ENCODE measurements at regions of chr5 and their contacts with region 1.

Region 1: GRCh38 chr5:72108202-72109061 is 1.2 kb downstream of the MAP1B start:
- DNase-seq: peak; percentile 85
- H3K4me3 ChIP-seq: peak overlapping the region; percentile 87
- H3K27ac ChIP-seq: peak overlapping the region; percentile 80
- H3K4me1 ChIP-seq: peaks cover 43% of the 10 kb centered on the region
- H3K27me3 ChIP-seq: no peaks in the 10 kb centered on the region
- CTCF ChIP-seq: no peak

Region 2: DNA sequence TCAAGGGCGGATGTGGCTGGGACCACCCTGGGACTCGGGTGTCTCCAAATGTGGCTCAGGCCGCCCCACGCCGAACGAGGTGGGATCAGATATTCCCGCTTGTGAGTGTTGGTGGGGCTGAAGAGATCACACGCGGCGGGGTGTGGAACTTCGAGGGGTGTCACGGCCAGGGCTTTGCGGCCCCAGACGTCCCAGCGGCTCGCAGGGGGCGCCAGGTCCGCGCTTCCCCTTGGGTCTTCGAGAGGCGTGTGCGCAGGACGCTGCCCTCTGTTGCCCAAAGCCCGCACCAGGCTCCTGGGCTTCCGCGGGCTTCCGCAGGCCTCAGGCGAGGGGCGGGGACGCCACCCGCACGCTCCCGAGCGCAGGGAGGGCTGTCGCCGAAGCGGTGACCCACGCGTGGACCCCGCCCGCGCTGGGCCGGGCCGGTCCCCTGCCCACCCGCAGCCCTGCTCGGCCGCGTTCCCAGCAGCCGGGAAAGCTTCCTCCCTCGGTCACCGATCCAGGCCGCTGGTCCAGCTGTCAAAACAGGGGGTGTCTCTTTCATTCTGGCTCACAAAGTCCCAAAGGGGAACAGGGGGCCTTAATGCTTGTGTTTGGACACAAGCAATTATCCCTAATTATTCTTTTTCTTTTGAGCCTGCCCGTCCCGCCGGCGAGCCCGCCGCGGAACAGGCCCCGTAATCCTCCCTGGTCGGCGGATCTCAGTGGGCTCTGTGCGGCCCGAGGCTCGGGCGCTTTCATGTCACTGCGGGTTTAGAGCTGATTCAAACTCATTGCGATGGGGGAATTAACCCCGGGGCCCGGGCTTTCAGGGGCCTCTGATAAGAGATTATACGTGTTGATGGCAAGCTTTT is 1125.1 kb after region 1 on chr5:
- CTCF ChIA-PET with region 1: no interaction called
- POLR2A ChIA-PET with region 1: interaction called, 12 read pairs
- intact Hi-C with region 1: no loop called
- DNase-seq: no peak
- H3K4me3 ChIP-seq: peak overlapping the region; percentile 15
- H3K27ac ChIP-seq: no peak overlapping the region
- H3K4me1 ChIP-seq: no peaks in the 10 kb centered on the region
- H3K27me3 ChIP-seq: peaks cover 4% of the 10 kb centered on the region
- CTCF ChIP-seq: no peak

Measured in A673 (cell line).